ENCODE measurements at regions of chr16 and their contacts with region 1.

Region 1: DNA sequence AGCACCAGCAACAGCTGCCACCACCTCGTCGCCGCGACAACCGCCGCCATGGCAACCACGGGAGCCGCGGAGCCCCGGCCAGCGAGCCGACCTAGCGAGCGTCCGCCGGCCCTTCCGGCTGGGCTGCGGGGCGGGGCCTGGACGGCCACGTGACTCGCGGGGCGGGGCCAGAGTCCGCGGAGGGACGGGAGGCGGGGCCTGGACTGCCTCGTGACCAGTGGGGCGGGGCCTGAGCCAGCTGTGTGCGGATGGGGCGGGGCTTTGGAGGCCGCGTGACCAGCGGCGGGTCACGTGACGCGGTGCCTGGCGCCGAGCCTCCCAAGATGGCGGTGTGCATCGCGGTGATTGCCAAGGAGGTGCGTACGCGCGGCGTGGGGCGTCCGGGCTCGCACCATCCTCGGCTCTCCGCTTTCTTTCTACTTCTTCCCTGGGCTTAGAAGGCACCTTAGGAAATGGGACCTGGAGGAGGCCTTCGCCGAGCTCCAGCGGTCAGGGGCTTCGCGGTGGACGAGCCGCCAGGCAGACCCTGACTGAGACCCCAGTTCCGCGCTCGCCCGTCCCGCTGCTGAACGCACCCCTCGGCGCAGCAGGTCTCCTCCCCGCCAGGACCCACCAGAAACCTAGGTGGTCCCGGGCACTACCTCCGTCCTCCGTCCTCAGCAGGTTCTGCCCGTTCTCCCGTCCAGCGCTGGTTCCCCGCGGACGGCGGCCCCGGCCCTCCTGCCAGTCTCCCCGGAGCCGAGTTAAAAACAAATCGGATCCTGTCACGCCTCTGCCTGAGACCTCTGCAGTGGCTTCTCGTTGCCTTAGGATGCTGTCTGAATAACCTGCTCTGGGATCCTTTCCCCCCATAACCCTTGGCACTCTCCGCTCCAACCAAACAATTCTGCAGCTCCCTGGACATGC is at the starts of genes GALNS and TRAPPC2L:
- DNase-seq: peak; percentile 98 to 100 (median 99)

Region 2: GRCh38 chr16:88737298-88738150 is 119.6 kb before region 1 on chr16:
- intact Hi-C with region 1: loop called (anchors 5 kb)
- DNase-seq: peak in 9 of 10 donors; percentile 50 to 95 (median 78)

Region 3: GRCh38 chr16:88799569-88800276 is 57.4 kb before region 1 on chr16:
- intact Hi-C with region 1: no loop called
- DNase-seq: no peak

Region 4: GRCh38 chr16:88811769-88812512 is 45.1 kb before region 1 on chr16 and contains the start of gene APRT:
- intact Hi-C with region 1: loop called (anchors 2 kb)
- DNase-seq: peak; percentile 88 to 99 (median 94)

Region 5: DNA sequence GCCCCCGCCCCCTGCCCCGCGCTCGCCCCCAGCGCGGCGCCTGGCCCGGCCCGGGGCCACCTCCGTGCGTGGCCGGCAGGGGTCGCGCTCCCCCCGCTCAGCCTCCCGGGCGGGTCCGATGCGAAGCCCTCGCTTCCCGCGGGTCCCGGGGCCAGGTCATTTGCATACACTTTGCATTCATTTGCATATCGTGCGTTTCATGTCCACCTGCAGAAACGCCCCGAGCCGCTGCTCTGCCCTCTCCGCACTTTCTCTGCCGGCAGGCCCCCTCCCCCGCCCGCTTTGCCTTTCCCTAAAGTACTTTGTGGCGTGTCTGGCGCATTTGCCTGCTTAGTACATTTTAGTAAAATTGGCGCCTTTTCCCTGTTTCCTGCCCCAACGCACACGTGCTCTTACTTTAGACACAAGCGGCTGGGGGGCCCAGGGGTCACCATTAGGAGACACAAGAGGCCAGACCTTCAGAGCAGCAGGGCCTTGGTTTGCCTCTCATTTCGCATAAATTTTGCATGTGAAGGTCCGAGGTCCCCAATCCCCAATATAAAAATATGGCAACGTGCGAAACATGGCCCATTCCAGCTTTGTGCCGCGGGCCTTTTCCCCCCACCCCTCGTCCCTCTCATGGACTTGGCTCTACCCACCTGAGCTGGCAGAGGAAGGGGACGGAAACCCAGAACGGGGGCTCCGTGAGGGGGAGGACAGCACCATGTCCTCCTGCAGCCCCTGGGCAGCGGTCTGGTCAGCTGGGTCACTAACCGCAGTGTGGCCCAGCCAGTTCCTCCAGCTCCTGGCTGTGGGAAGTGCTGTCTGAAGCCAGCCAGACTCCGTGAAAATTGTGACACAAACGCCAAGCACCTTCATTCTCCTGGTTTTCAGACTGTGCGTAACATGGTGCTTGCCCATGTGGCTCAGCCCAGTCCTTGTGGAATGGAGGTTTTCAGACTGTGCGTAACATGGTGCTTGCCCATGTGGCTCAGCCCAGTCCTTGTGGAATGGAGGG is 85.1 kb after region 1 on chr16:
- intact Hi-C with region 1: loop called (anchors 5 kb)
- DNase-seq: peak in 3 of 10 donors; percentile 45 to 50 (median 48)

Region 6: DNA sequence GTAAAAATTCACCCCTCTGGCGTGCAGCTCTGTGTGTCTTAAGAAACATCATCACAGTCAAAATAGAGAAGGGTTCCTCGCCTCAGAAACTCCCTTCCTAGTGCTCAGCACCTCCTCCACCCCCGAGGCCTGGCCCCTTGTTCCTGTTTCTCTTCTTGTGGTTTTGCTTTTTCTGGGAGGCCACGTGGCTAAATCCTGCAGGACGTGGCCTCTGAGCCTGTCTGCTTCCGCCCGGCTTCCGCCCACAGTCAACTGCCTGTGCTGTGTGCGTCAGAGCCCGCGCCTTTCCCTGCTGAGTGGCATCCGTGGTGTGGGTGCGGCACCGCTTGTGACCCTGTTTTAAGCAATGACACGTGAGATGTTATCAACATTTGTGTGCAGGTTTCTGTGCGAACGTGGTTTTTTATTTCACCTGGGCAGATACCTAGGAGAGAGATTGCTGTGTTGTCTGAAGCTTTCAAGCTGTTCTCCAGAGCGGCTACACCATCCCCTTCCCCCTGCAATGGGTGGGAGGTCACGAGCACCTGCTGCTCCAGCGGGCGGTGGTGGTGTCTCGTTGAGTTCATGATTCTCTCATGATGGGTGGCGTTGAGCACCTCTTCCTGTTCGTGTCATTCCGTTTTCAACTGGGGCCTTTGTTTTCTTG is 258.3 kb after region 1 on chr16:
- intact Hi-C with region 1: no loop called
- DNase-seq: peak; percentile 22 to 92 (median 58)

Region 7: GRCh38 chr16:89217388-89218191 is 360.5 kb after region 1 on chr16 and contains the start of gene ZNF778:
- intact Hi-C with region 1: loop called (anchors 2 kb)
- DNase-seq: peak; percentile 63 to 98 (median 81)